ENCODE measurements at regions of chr7 and their contacts with region 1.

Region 1: DNA sequence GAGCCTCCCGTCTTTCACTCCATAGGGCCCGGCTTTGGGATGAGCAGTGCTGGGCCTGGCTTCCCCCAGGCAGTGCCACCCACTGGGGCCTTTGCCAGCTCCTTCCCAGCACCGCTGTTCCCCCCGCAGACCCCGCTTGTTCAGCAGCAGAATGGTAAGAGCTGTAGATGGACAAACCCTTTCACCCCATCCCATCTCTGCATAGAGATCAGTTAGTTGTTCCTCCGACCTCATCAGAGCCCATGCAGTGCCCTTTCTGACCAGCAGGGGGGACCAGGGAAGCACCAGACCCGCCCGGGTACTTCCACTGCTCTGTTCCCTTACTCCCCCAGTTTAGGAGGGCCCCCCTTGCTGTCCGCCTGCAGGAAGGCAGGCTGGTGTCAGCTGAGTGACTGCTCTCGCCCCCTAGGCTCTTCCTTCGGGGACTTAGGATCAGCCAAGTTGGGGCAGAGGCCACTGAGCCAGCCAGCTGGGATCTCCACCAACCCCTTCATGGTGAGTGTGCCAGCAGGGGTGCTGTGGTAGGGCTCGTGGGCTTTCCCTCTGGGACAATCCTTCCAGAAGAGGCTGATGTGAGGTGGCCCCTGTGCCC is 9.8 kb downstream of the SAP25 start:
- DNase-seq: peak; percentile 95
- H3K4me3 Mint-ChIP-seq: no peak overlapping the region
- H3K27ac Mint-ChIP-seq: peak overlapping the region; percentile 3
- H3K4me1 Mint-ChIP-seq: peaks cover 23% of the 10 kb centered on the region
- H3K27me3 Mint-ChIP-seq: no peaks in the 10 kb centered on the region

Region 2: DNA sequence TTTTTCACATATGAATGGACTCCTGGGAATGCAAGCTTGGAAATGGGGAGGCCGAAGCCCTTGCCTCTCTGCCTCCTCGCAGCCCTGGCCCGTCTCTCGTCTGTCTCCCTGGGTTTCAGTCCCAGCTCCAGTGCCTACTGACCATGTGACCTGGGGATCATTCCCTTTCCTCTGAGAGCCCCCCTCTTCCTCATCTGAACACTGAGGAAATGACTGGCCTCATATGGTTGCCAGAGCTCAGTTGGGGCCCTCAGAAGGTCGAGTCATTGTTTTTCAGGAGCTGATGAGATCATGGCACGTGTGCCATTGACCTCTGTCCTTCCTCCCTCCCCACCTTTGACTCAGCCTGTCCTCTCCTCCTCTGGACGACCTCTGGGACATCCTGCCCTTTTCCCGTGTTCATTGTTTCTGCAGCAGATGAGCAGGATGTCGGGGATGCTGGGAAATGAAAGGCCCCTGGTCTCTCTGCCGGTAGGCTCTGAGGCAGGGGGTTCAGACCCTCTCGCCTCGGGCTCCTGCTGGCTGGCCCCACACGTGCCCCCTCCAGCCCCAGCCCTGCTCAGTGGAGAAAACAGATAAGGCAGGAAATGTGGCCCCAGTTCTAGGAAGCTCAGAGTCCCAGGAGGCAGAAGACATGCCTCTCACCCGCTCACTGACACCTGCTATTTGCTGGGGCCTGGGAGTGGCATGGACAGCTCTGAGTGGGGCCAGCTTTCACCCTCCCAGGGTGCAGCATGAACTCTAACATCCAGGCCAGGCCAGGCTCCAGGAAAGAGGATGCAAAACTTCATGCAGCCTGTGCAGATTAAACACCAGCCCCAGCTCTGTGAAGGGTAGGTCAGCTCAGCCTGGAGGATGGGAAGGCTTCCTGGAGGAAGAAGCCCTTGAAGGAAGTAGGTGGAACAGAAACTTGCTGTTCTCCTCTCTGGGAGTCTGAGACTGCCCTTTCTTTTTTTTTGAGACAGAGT is 119.3 kb before region 1 on chr7:
- intact Hi-C with region 1: no loop called
- DNase-seq: peak; percentile 64
- H3K4me3 Mint-ChIP-seq: peak overlapping the region; percentile 8
- H3K27ac Mint-ChIP-seq: peak overlapping the region; percentile 88
- H3K4me1 Mint-ChIP-seq: peaks cover 21% of the 10 kb centered on the region
- H3K27me3 Mint-ChIP-seq: no peaks in the 10 kb centered on the region

Region 3: GRCh38 chr7:100469227-100470044 is 94.5 kb before region 1 on chr7:
- intact Hi-C with region 1: loop called (anchors 1 kb)
- DNase-seq: peak; percentile 94
- H3K4me3 Mint-ChIP-seq: no peak overlapping the region
- H3K27ac Mint-ChIP-seq: no peak overlapping the region
- H3K4me1 Mint-ChIP-seq: peaks cover 25% of the 10 kb centered on the region
- H3K27me3 Mint-ChIP-seq: no peaks in the 10 kb centered on the region

Region 4: GRCh38 chr7:100545360-100546128 is 18.4 kb before region 1 on chr7:
- intact Hi-C with region 1: loop called (anchors 1 kb)
- DNase-seq: peak; percentile 79
- H3K4me3 Mint-ChIP-seq: peak overlapping the region; percentile 99
- H3K27ac Mint-ChIP-seq: peak overlapping the region; percentile 99
- H3K4me1 Mint-ChIP-seq: peaks cover 83% of the 10 kb centered on the region
- H3K27me3 Mint-ChIP-seq: no peaks in the 10 kb centered on the region

Region 5: DNA sequence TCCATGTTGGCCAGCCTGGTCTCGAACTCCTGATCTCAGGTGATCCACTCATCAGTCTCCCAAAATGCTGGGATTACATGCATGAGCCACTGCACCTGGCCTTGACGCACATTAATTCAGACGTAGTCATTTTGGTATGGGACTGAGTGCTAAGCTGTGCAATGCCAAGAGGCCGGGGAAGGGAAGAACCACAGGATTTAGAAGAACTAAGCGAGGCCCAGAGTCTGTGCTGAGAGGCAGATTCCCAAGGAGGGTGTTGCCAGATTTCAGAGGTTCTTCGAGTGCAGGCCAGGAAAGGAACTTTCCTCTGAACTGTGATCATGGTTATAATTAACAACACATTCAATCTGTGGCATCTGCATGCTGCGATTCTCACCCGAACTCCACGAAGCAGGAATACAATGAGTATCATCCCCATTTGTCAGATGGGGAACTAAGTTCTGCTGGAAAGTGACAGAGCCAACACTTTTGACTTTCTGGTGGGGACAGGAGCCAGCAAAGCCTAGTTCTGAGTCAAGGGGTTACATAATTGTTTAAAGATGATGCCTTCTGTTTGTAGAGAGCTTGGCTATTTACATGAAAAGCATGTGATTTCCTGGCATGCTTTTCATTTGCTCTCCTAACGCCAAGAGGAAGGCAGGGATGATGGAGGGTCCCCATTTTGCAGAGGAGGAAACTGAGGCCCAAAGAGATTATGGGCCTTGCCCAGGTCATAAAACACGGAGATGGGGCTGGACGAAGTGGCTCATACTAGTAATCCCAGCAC is 163.3 kb after region 1 on chr7:
- intact Hi-C with region 1: loop called (anchors 1 kb)
- DNase-seq: no peak
- H3K4me3 Mint-ChIP-seq: no peak overlapping the region
- H3K27ac Mint-ChIP-seq: no peak overlapping the region
- H3K4me1 Mint-ChIP-seq: peaks cover 6% of the 10 kb centered on the region
- H3K27me3 Mint-ChIP-seq: peaks cover 15% of the 10 kb centered on the region